PC-3 (cell line): ENCODE measurements at regions of chr4 and their contacts with region 1.

Region 1: DNA sequence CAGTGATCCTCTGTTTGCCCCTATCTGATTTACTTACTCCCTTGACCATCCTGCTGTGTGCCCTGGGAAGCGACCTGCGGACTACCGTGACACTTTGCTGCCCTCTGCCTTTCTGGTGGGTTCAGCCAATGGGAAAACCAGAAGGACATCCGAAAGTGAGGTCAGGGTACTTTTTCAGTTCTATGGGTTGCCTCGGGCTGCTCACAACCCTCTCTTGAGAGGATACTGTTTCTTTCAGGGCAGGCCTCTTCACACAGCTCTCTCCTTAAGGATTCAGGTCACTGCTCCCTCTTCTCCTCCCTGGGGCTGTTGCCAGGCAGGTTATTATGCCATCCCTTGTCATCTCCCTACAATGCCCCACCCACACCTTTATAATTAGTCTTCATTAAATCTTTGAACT is 21.4 kb downstream of the PLAC8 start:
- DNase-seq: no peak
- ATAC-seq: no peak
- H3K4me3 ChIP-seq: no peak overlapping the region
- H3K27ac ChIP-seq: no peak overlapping the region
- H3K4me1 ChIP-seq: peaks cover 22% of the 10 kb centered on the region
- H3K27me3 ChIP-seq: no peaks in the 10 kb centered on the region
- CTCF ChIP-seq: no peak

Region 2: DNA sequence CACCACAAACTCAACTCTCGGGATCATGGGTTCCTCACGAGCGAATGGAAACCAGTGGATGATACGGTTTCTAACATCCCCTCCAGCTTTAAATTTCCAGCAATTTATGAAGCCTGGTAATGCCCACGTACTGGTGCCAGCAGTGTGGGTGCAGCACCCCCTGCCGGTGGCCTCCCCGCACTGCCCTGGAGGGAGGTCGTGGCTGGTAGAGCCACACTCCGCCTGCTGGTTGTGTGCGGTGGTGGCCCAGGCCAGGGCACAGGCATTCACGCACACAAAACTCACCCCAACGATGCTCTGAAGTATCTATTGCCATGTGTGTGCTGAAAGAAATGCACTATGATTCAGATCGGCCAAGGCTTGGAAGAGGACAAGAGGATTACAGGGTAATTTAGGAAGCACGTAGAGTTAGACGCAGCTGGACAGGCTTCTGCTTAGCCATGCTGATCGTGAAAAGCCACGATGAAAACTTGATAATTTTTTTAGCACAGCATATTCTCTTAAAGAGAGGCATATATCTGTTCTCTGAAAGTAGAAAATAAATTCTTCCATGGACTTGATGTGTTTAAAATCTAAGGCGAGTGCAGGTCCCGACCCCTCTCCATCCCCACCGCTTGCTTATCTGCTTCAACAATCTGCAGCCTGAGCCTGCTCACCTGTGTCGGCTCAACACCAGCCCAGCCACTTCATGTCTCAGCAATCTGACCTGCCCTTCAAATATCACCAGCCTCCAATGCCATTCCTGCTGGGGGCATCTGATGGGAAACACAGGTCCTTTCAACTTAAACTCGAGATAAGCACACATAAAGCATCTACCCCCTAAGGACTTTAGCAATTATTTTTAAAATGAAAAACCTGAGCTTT is 353.6 kb before region 1 on chr4:
- CTCF ChIA-PET with region 1: no interaction called
- POLR2A ChIA-PET with region 1: no interaction called
- intact Hi-C with region 1: no loop called
- DNase-seq: peak; percentile 77
- ATAC-seq: peak; percentile 99
- H3K4me3 ChIP-seq: no peak overlapping the region
- H3K27ac ChIP-seq: no peak overlapping the region
- H3K4me1 ChIP-seq: no peaks in the 10 kb centered on the region
- H3K27me3 ChIP-seq: no peaks in the 10 kb centered on the region
- CTCF ChIP-seq: peak; percentile 94

Region 3: GRCh38 chr4:82900331-82901128 is 192.6 kb before region 1 on chr4 and contains the start of gene THAP9:
- CTCF ChIA-PET with region 1: no interaction called
- POLR2A ChIA-PET with region 1: interaction called, 24 read pairs
- intact Hi-C with region 1: no loop called
- DNase-seq: peak; percentile 98
- ATAC-seq: peak; percentile 92
- H3K4me3 ChIP-seq: peak within 1 kb of the TSS; percentile 79
- H3K27ac ChIP-seq: peak within 1 kb of the TSS; percentile 97
- H3K4me1 ChIP-seq: peaks cover 25% of the 10 kb centered on the region
- H3K27me3 ChIP-seq: no peaks in the 10 kb centered on the region
- CTCF ChIP-seq: no peak
- total RNA-seq, gene THAP9: 3.2 and 3.3 TPM in 2 replicates

Region 4: GRCh38 chr4:83110223-83110945 is 17.3 kb after region 1 on chr4:
- CTCF ChIA-PET with region 1: interaction called, 3 read pairs
- POLR2A ChIA-PET with region 1: interaction called, 26 read pairs
- intact Hi-C with region 1: no loop called
- DNase-seq: peak; percentile 86
- ATAC-seq: peak; percentile 87
- H3K4me3 ChIP-seq: peak overlapping the region; percentile 77
- H3K27ac ChIP-seq: peak overlapping the region; percentile 30; the same call in 1 of the 2 replicates
- H3K4me1 ChIP-seq: peaks cover 20% of the 10 kb centered on the region
- H3K27me3 ChIP-seq: no peaks in the 10 kb centered on the region
- CTCF ChIP-seq: peak; percentile 77